PC-3 (cell line): ENCODE measurements at regions of chr11 and their contacts with region 1.

Region 1: GRCh38 chr11:46238967-46239800 is 38.3 kb upstream of the CREB3L1 start:
- DNase-seq: peak; percentile 86
- ATAC-seq: peak; percentile 68
- H3K4me3 ChIP-seq: peak overlapping the region; percentile 66
- H3K27ac ChIP-seq: no peak overlapping the region
- H3K4me1 ChIP-seq: peaks cover 31% of the 10 kb centered on the region
- H3K27me3 ChIP-seq: no peaks in the 10 kb centered on the region
- CTCF ChIP-seq: peak; percentile 88

Region 2: GRCh38 chr11:45964911-45965389 is 274.2 kb before region 1 on chr11:
- CTCF ChIA-PET with region 1: no interaction called
- POLR2A ChIA-PET with region 1: no interaction called
- intact Hi-C with region 1: loop called (anchors 10 kb)
- DNase-seq: peak; percentile 76
- ATAC-seq: peak; percentile 93
- H3K4me3 ChIP-seq: no peak overlapping the region; the same call in 1 of the 2 replicates
- H3K27ac ChIP-seq: no peak overlapping the region
- H3K4me1 ChIP-seq: no peaks in the 10 kb centered on the region
- H3K27me3 ChIP-seq: no peaks in the 10 kb centered on the region
- CTCF ChIP-seq: peak; percentile 90

Region 3: DNA sequence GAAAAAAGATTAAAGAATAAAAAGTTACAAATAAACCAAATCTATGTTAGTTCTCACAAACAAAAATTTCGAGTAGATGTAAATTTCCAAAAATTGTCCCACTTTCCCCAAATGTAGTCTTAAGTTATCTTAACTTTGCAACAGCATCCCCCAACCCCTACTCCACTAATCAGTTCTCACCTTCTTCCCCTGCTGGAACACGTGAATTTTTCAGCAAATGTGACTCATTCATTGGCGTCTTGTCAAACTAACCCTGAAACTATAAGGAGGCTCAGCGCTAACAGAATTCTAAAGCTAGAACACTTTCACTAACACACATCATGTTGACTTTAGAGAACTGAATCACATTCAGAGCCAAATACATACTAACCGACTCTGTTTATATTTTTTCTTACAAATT is 164.0 kb before region 1 on chr11:
- CTCF ChIA-PET with region 1: no interaction called
- POLR2A ChIA-PET with region 1: no interaction called
- intact Hi-C with region 1: loop called (anchors 5 kb)
- DNase-seq: peak; percentile 65
- ATAC-seq: peak; percentile 84
- H3K4me3 ChIP-seq: no peak overlapping the region
- H3K27ac ChIP-seq: no peak overlapping the region
- H3K4me1 ChIP-seq: peaks cover 8% of the 10 kb centered on the region
- H3K27me3 ChIP-seq: no peaks in the 10 kb centered on the region
- CTCF ChIP-seq: no peak

Region 4: GRCh38 chr11:46127150-46127638 is 112.0 kb before region 1 on chr11:
- CTCF ChIA-PET with region 1: no interaction called
- POLR2A ChIA-PET with region 1: interaction called, 3 read pairs
- intact Hi-C with region 1: loop called (anchors 2 kb)
- DNase-seq: peak; percentile 78
- ATAC-seq: peak; percentile 90
- H3K4me3 ChIP-seq: no peak overlapping the region
- H3K27ac ChIP-seq: no peak overlapping the region
- H3K4me1 ChIP-seq: peaks cover 14% of the 10 kb centered on the region
- H3K27me3 ChIP-seq: no peaks in the 10 kb centered on the region
- CTCF ChIP-seq: peak; percentile 68

Region 5: GRCh38 chr11:46210133-46210636 is 29.0 kb before region 1 on chr11:
- CTCF ChIA-PET with region 1: no interaction called
- POLR2A ChIA-PET with region 1: no interaction called
- intact Hi-C with region 1: no loop called
- DNase-seq: peak; percentile 19
- ATAC-seq: no peak
- H3K4me3 ChIP-seq: no peak overlapping the region
- H3K27ac ChIP-seq: no peak overlapping the region
- H3K4me1 ChIP-seq: no peaks in the 10 kb centered on the region
- H3K27me3 ChIP-seq: no peaks in the 10 kb centered on the region
- CTCF ChIP-seq: no peak

Region 6: GRCh38 chr11:46252373-46252914 is 13.3 kb after region 1 on chr11:
- CTCF ChIA-PET with region 1: no interaction called
- POLR2A ChIA-PET with region 1: no interaction called
- intact Hi-C with region 1: no loop called
- DNase-seq: no peak
- ATAC-seq: no peak
- H3K4me3 ChIP-seq: no peak overlapping the region
- H3K27ac ChIP-seq: no peak overlapping the region
- H3K4me1 ChIP-seq: peaks cover 17% of the 10 kb centered on the region
- H3K27me3 ChIP-seq: no peaks in the 10 kb centered on the region
- CTCF ChIP-seq: no peak

Region 7: DNA sequence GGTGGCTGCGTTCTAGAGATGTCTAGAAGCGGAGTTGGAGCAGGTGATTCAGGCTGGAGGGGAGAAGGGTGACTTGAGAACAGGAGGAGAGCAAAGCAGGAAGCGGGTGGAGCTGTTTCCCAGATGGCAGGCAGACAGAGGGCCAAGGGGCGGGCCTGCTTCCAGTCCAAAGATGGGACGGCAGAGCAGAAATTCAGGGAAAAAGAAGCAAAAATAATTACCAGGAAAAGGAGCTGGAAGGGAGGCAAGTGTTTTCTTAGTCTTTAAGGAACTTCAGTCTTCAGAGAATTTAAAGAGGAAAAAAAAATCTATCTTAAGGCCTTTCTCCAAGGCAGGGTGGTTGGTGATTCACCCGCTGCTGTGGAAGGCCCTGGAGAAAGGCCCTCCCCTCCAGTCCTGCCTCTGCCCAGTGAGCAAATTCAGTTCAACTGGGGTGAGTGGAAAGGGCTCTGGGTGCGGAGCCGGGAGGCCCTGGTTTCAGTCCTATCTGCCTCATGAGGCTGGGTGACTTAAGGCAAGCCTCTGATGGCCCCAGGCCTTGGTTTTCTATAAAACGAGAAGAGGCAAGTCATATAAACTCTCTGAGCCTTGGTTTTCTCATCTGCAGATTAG is 33.7 kb after region 1 on chr11:
- CTCF ChIA-PET with region 1: interaction called, 3 read pairs
- POLR2A ChIA-PET with region 1: interaction called, 8 read pairs
- intact Hi-C with region 1: loop called (anchors 1 kb)
- DNase-seq: peak; percentile 56
- ATAC-seq: peak; percentile 60
- H3K4me3 ChIP-seq: no peak overlapping the region; the same call in 1 of the 2 replicates
- H3K27ac ChIP-seq: peak overlapping the region; percentile 69
- H3K4me1 ChIP-seq: peaks cover 29% of the 10 kb centered on the region
- H3K27me3 ChIP-seq: peaks cover 6% of the 10 kb centered on the region
- CTCF ChIP-seq: no peak

Region 8: GRCh38 chr11:46308631-46309419 is 69.6 kb after region 1 on chr11:
- CTCF ChIA-PET with region 1: interaction called, 6 read pairs
- POLR2A ChIA-PET with region 1: interaction called, 11 read pairs
- intact Hi-C with region 1: loop called (anchors 1 kb)
- DNase-seq: peak; percentile 70
- ATAC-seq: peak; percentile 79
- H3K4me3 ChIP-seq: no peak overlapping the region
- H3K27ac ChIP-seq: no peak overlapping the region
- H3K4me1 ChIP-seq: peaks cover 8% of the 10 kb centered on the region; the same call in 1 of the 2 replicates
- H3K27me3 ChIP-seq: no peaks in the 10 kb centered on the region
- CTCF ChIP-seq: peak; percentile 92